H1 (cell line): ENCODE measurements at regions of chr1 and their contacts with region 1.

Region 1: GRCh38 chr1:223683586-223684487 is 18.3 kb upstream of the CAPN8 start:
- DNase-seq: peak in 1 of 2 experiments; percentile 78
- H3K4me3 ChIP-seq: no peak overlapping the region
- H3K27ac ChIP-seq: no peak overlapping the region
- H3K4me1 ChIP-seq: no peaks in the 10 kb centered on the region
- H3K27me3 ChIP-seq: no peaks in the 10 kb centered on the region
- CTCF ChIP-seq: peak; percentile 48 to 89 (median 87)
- EP300 ChIP-seq: no peak
- POLR2A ChIP-seq: no peak
- RAD21 ChIP-seq: peak; percentile 97 to 98

Region 2: GRCh38 chr1:223133824-223134435 is 549.9 kb before region 1 on chr1:
- CTCF ChIA-PET with region 1: interaction called, 16 read pairs
- POLR2A ChIA-PET with region 1: no interaction called
- DNase-seq: peak; percentile 70 to 93
- H3K4me3 ChIP-seq: peak overlapping the region; percentile 34 to 63 (median 44); a peak in 7 of 8 replicates
- H3K27ac ChIP-seq: peak overlapping the region; percentile 16; the same call in 1 of the 2 replicates
- H3K4me1 ChIP-seq: peaks cover 16 to 25% (median 19%) of the 10 kb centered on the region in 4 experiments
- H3K27me3 ChIP-seq: peaks cover 0 to 7% (median 2%) of the 10 kb centered on the region in 4 experiments; a peak in 6 of 7 replicates
- CTCF ChIP-seq: peak; percentile 88 to 93 (median 88)
- EP300 ChIP-seq: peak in 1 of 2 experiments; percentile 42; a peak in 1 of 3 replicates
- POLR2A ChIP-seq: peak in 1 of 2 experiments; percentile 61; a peak in 2 of 3 replicates
- RAD21 ChIP-seq: peak; percentile 68 to 76

Region 3: GRCh38 chr1:223515926-223516325 is 167.9 kb before region 1 on chr1:
- CTCF ChIA-PET with region 1: interaction called, 10 read pairs
- POLR2A ChIA-PET with region 1: no interaction called
- DNase-seq: no peak
- H3K4me3 ChIP-seq: no peak overlapping the region
- H3K27ac ChIP-seq: no peak overlapping the region
- H3K4me1 ChIP-seq: peaks cover 0 to 5% (median 2%) of the 10 kb centered on the region in 4 experiments; a peak in 2 of 7 replicates
- H3K27me3 ChIP-seq: no peaks in the 10 kb centered on the region
- CTCF ChIP-seq: no peak
- EP300 ChIP-seq: no peak
- POLR2A ChIP-seq: no peak
- RAD21 ChIP-seq: no peak

Region 4: GRCh38 chr1:223538981-223539380 is 144.9 kb before region 1 on chr1:
- CTCF ChIA-PET with region 1: interaction called, 18 read pairs
- POLR2A ChIA-PET with region 1: no interaction called
- DNase-seq: no peak
- H3K4me3 ChIP-seq: no peak overlapping the region
- H3K27ac ChIP-seq: no peak overlapping the region
- H3K4me1 ChIP-seq: peaks cover 0 to 3% (median 0%) of the 10 kb centered on the region in 4 experiments; a peak in 1 of 7 replicates
- H3K27me3 ChIP-seq: no peaks in the 10 kb centered on the region
- CTCF ChIP-seq: no peak
- EP300 ChIP-seq: no peak
- POLR2A ChIP-seq: no peak
- RAD21 ChIP-seq: no peak

Region 5: DNA sequence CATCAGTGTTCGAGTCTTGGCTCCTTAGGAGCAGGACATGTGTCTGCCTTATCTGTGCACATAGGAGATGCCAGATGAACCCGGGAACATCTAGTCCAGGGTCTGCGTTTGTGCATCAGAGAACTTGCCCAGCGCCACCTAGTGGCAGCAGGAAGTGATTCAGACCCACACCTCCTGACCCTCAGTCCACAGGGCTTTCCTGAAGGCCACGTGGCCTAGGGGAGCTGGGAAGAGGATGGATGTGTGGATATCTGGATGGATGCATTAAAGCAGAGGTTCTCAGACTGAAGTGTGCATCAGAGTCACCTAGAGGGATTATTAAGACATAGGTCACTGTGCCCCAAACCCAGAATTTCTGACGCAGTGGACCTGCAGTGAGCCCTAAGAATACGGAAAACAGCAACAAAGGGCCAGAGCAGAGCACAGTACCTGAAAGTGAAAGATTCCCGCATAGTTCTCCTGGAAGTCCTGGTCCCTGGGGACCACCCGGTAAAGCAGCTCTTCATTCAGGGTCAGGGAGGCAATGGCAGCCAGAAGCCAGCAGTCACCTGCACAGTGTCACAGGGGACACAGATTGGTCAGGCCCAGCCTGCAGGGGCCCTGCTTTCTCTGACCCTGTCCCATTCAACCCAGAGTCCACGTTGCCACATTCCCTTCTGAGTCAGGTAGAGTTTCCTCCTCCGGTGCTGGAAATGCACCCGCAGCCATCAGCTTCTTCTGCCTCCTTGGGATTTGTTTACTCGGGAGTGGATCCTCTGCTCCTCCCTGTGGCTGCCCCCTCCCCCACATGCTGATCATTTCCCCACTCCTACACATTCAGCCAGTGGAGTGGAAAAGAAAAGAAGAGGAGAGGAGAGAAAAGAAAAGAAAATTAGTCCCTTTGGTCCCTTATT is 55.4 kb before region 1 on chr1:
- CTCF ChIA-PET with region 1: interaction called, 11 read pairs
- POLR2A ChIA-PET with region 1: no interaction called
- DNase-seq: peak; percentile 10 to 76
- H3K4me3 ChIP-seq: no peak overlapping the region
- H3K27ac ChIP-seq: no peak overlapping the region
- H3K4me1 ChIP-seq: 0 out of 7 replicates have a peak, but pooled peaks cover 0 to 4% (median 0%) of the 10 kb centered on the region in 4 experiments
- H3K27me3 ChIP-seq: no peaks in the 10 kb centered on the region
- CTCF ChIP-seq: peak; percentile 71 to 91 (median 87)
- EP300 ChIP-seq: no peak
- POLR2A ChIP-seq: no peak
- RAD21 ChIP-seq: peak; percentile 51 to 62

Region 6: GRCh38 chr1:223670458-223671168 is 13.2 kb before region 1 on chr1:
- CTCF ChIA-PET with region 1: interaction called, 60 read pairs
- POLR2A ChIA-PET with region 1: interaction called, 3 read pairs
- DNase-seq: peak; percentile 53 to 64
- H3K4me3 ChIP-seq: no peak overlapping the region
- H3K27ac ChIP-seq: no peak overlapping the region
- H3K4me1 ChIP-seq: no peaks in the 10 kb centered on the region; a peak in 2 of 7 replicates
- H3K27me3 ChIP-seq: no peaks in the 10 kb centered on the region
- CTCF ChIP-seq: peak; percentile 73 to 92 (median 88)
- EP300 ChIP-seq: no peak
- POLR2A ChIP-seq: no peak
- RAD21 ChIP-seq: peak; percentile 85 to 90